CD8-positive, alpha-beta T cell (primary cell): ENCODE measurements at regions of chrX and their contacts with region 1.

Region 1: DNA sequence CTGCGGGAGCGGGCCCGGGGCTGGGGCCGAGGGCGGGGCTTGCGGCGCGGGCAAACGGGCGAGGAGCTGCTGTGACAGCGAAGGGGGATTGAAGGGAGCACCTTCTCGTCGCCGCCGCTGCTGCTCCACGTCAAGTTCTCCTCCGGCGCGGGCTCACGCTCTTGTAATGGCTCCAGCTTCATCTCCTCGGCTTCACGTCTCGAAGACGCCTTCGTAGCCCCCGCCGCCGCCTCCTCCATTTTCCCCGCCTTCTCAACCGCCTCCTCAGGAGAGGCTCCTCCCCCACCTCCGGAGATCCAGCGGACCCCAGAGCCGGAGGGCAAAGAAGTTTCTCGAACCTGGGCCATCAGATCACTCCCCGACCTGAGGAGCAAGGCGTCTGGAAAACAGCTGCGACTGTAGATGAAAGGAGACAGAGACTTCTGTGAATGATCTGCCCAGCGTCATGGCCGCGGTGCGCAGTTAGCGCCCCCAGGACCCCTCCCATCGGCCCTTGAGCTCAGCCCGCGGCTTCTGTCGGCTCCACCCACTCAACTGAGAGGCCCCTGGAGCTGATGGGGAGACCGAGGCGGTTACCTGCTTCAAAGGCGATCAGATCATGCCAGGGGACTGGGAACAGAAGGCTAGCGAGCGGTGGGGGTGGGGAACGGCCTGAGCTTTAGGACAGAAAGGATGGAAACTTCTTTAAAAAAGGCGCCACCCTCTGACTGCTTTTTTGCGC is 895 bp downstream of the USP51 start:
- DNase-seq: peak; percentile 30 to 80 (median 67)
- ATAC-seq: peak; percentile 78
- H3K4me3 ChIP-seq: peak overlapping the region; percentile 90 to 91
- H3K4me3 Mint-ChIP-seq: peak overlapping the region; percentile 93
- H3K27ac ChIP-seq: peak overlapping the region; percentile 90 to 94
- H3K27ac Mint-ChIP-seq: peak overlapping the region; percentile 96
- H3K4me1 ChIP-seq: peaks cover 10% of the 10 kb centered on the region
- H3K4me1 Mint-ChIP-seq: peaks cover 14% of the 10 kb centered on the region
- H3K27me3 ChIP-seq: no peaks in the 10 kb centered on the region
- H3K27me3 Mint-ChIP-seq: no peaks in the 10 kb centered on the region
- CTCF ChIP-seq: no peak

Region 2: DNA sequence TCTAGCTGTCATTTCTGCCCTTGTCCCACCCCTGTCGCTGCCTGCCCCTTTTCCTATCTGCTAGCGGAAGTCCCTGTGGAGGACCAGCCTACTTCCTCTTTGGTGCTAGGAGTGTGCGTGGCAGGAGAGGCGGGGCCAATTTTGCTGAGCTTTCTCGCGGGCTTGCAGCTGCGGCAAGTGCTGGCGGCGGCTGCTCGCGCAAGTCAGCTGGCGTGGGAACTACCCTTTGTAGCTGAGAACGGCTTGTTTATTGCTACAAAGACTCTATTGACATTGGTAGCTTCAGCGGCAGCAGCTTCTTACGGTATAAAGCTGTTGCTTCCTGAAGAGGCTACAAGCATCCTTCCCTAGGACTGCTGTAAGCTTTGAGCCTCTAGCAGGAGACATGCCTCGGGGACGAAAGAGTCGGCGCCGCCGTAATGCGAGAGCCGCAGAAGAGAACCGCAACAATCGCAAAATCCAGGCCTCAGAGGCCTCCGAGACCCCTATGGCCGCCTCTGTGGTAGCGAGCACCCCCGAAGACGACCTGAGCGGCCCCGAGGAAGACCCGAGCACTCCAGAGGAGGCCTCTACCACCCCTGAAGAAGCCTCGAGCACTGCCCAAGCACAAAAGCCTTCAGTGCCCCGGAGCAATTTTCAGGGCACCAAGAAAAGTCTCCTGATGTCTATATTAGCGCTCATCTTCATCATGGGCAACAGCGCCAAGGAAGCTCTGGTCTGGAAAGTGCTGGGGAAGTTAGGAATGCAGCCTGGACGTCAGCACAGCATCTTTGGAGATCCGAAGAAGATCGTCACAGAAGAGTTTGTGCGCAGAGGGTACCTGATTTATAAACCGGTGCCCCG is 36.5 kb before region 1 on chrX and contains the start of gene MAGEH1:
- CTCF ChIA-PET with region 1: interaction called, 3 read pairs
- POLR2A ChIA-PET with region 1: interaction called, 38 read pairs
- intact Hi-C with region 1: no loop called
- DNase-seq: peak; percentile 55 to 92 (median 78)
- ATAC-seq: peak; percentile 91
- H3K4me3 ChIP-seq: peak within 1 kb of the TSS; percentile 76 to 86
- H3K4me3 Mint-ChIP-seq: peak within 1 kb of the TSS; percentile 93
- H3K27ac ChIP-seq: peak within 1 kb of the TSS; percentile 81 to 83
- H3K27ac Mint-ChIP-seq: peak within 1 kb of the TSS; percentile 97
- H3K4me1 ChIP-seq: peaks cover 12% of the 10 kb centered on the region
- H3K4me1 Mint-ChIP-seq: peaks cover 20% of the 10 kb centered on the region
- H3K27me3 ChIP-seq: no peaks in the 10 kb centered on the region
- H3K27me3 Mint-ChIP-seq: no peaks in the 10 kb centered on the region
- CTCF ChIP-seq: no peak
- total RNA-seq, gene MAGEH1: 13.0 to 14.7 TPM